ENCODE measurements at regions of chr7 and their contacts with region 1.

Region 1: DNA sequence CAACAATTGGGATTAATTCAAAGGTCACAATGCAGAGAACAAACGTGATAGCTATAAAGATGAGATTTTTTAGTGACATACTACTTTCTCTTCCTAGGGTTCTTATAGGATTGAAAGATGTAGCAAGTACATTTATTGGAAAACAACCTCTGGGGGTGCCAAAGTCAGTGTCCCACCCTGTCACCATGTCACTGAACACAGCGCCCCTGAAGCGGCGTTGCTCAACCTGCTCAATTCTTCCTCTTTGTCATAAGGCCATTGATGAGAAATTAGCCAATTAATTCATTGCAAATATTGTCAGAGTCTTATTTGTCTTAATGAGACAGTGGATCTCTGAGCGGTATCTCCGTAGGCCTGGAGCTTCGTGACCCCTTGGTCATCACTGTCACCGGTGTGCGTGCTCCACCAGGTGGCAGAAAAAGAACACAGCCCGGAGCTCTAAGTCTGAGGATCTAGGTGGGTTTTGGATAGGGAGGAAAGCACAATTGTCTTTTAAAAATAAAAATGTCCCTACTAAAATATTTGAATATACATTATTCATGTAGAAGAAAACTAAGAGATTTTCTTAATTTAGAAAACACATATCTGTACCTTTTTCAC is 362.6 kb downstream of the PAXIP1 start:
- DNase-seq: peak in 1 of 2 experiments; percentile 54
- H3K4me3 ChIP-seq: no peak overlapping the region
- H3K27ac ChIP-seq: no peak overlapping the region
- H3K4me1 ChIP-seq: no peaks in the 10 kb centered on the region
- H3K27me3 ChIP-seq: no peaks in the 10 kb centered on the region
- CTCF ChIP-seq: peak; percentile 65 to 73 (median 70)
- EP300 ChIP-seq: no peak
- POLR2A ChIP-seq: no peak
- RAD21 ChIP-seq: peak; percentile 72 to 87

Region 2: DNA sequence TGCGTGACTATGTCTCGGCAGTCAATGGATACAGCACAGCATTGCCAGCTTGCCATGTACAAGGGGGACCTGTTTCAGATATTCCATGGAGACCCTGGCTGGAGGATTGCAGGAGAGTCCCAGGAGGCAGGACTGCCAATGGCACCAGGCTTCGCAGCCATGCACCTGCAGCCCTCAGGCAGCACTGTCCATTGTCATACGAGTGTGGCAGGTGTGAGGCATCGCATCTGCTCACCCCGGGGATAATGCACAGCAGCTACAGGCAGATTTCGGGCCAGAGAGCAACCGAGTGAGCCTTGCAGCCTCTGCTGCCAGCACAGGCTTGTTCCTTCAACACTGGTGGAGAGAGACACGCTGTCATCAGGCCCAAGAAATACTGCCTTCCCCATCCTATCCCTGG is 52.6 kb before region 1 on chr7:
- CTCF ChIA-PET with region 1: interaction called, 11 read pairs
- POLR2A ChIA-PET with region 1: no interaction called
- DNase-seq: no peak
- H3K4me3 ChIP-seq: no peak overlapping the region
- H3K27ac ChIP-seq: no peak overlapping the region
- H3K4me1 ChIP-seq: peaks cover 0 to 2% (median 1%) of the 10 kb centered on the region in 4 experiments; a peak in 2 of 7 replicates
- H3K27me3 ChIP-seq: no peaks in the 10 kb centered on the region
- CTCF ChIP-seq: no peak
- EP300 ChIP-seq: no peak
- POLR2A ChIP-seq: no peak
- RAD21 ChIP-seq: no peak

Region 3: GRCh38 chr7:154651501-154651900 is 11.1 kb after region 1 on chr7:
- CTCF ChIA-PET with region 1: interaction called, 12 read pairs
- POLR2A ChIA-PET with region 1: no interaction called
- DNase-seq: no peak
- H3K4me3 ChIP-seq: no peak overlapping the region
- H3K27ac ChIP-seq: no peak overlapping the region
- H3K4me1 ChIP-seq: no peaks in the 10 kb centered on the region
- H3K27me3 ChIP-seq: no peaks in the 10 kb centered on the region
- CTCF ChIP-seq: no peak
- EP300 ChIP-seq: no peak
- POLR2A ChIP-seq: no peak
- RAD21 ChIP-seq: no peak

Region 4: GRCh38 chr7:154759989-154760388 is 119.6 kb after region 1 on chr7:
- CTCF ChIA-PET with region 1: interaction called, 10 read pairs
- POLR2A ChIA-PET with region 1: no interaction called
- DNase-seq: no peak
- H3K4me3 ChIP-seq: no peak overlapping the region
- H3K27ac ChIP-seq: no peak overlapping the region
- H3K4me1 ChIP-seq: peaks cover 0 to 6% (median 1%) of the 10 kb centered on the region in 4 experiments; a peak in 3 of 7 replicates
- H3K27me3 ChIP-seq: no peaks in the 10 kb centered on the region
- CTCF ChIP-seq: peak in 1 of 3 experiments; percentile 7; a peak in 2 of 4 replicates
- EP300 ChIP-seq: no peak
- POLR2A ChIP-seq: no peak
- RAD21 ChIP-seq: peak; percentile 9 to 12; a peak in 1 of 4 replicates

Region 5: GRCh38 chr7:154794110-154794780 is 153.9 kb after region 1 on chr7:
- CTCF ChIA-PET with region 1: interaction called, 13 read pairs
- POLR2A ChIA-PET with region 1: no interaction called
- DNase-seq: peak in 1 of 2 experiments; percentile 90
- H3K4me3 ChIP-seq: peak overlapping the region; percentile 11 to 57 (median 32); a peak in 7 of 8 replicates
- H3K27ac ChIP-seq: no peak overlapping the region
- H3K4me1 ChIP-seq: peaks cover 0 to 2% (median 0%) of the 10 kb centered on the region in 4 experiments; a peak in 3 of 7 replicates
- H3K27me3 ChIP-seq: no peaks in the 10 kb centered on the region; a peak in 1 of 7 replicates
- CTCF ChIP-seq: peak; percentile 83 to 91 (median 90)
- EP300 ChIP-seq: no peak
- POLR2A ChIP-seq: no peak; a peak in 1 of 3 replicates
- RAD21 ChIP-seq: peak; percentile 62 to 73

Region 6: GRCh38 chr7:154804449-154804848 is 164.1 kb after region 1 on chr7:
- CTCF ChIA-PET with region 1: no interaction called
- POLR2A ChIA-PET with region 1: no interaction called
- DNase-seq: no peak
- H3K4me3 ChIP-seq: no peak overlapping the region
- H3K27ac ChIP-seq: no peak overlapping the region
- H3K4me1 ChIP-seq: no peaks in the 10 kb centered on the region
- H3K27me3 ChIP-seq: no peaks in the 10 kb centered on the region
- CTCF ChIP-seq: no peak
- EP300 ChIP-seq: no peak
- POLR2A ChIP-seq: no peak
- RAD21 ChIP-seq: no peak